IMR-90 (cell line): ENCODE measurements at regions of chr6 and their contacts with region 1.

Region 1: DNA sequence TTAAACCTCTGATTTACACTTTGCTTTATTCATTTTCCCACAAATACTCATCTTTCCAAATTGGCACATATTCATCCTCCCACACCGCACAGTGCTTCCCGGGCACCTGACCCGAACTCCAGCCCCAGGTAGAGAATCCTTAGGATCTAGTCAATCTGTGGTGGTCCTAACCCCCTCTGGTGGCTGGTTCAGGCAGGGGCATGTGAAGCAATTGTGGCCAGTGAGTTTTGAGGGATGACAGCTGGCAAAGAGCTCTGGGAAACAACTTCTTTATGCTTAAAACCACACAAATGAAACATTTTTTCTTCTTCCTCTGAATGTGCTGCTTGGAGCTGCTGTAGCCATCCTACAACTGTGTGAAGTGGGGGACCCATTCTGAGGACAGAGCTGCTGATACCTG is 54.7 kb downstream of the ELOVL5 start:
- DNase-seq: no peak
- ATAC-seq: no peak; the same call in 1 of the 2 replicates
- H3K4me3 ChIP-seq: no peak overlapping the region
- H3K27ac ChIP-seq: no peak overlapping the region
- H3K4me1 ChIP-seq: peaks cover 2% of the 10 kb centered on the region; the same call in 1 of the 2 replicates
- H3K27me3 ChIP-seq: no peaks in the 10 kb centered on the region
- CTCF ChIP-seq: peak; percentile 40
- POLR2A ChIP-seq: no peak
- RAD21 ChIP-seq: 0 out of 2 replicates have a peak, but pooled peaks have one; percentile 8

Region 2: GRCh38 chr6:53348371-53349208 is 54.5 kb after region 1 on chr6 and contains the start of gene ELOVL5:
- CTCF ChIA-PET with region 1: no interaction called
- POLR2A ChIA-PET with region 1: no interaction called
- dilution Hi-C with region 1: no loop called
- in situ Hi-C with region 1: no loop called
- intact Hi-C with region 1: loop called (anchors 5 kb)
- DNase-seq: peak; percentile 98
- ATAC-seq: peak; percentile 65
- H3K4me3 ChIP-seq: peak within 1 kb of the TSS; percentile 95
- H3K27ac ChIP-seq: peak within 1 kb of the TSS; percentile 91
- H3K4me1 ChIP-seq: 0 out of 2 replicates have a peak, but pooled peaks cover 1% of the 10 kb centered on the region
- H3K27me3 ChIP-seq: peaks cover 3% of the 10 kb centered on the region; the same call in 1 of the 2 replicates
- CTCF ChIP-seq: no peak
- POLR2A ChIP-seq: peak; percentile 84
- RAD21 ChIP-seq: no peak
- total RNA-seq, gene ELOVL5: 42.3 and 50.5 TPM in 2 replicates